Breast epithelium (tissue), 4 donors: ENCODE measurements at regions of chr9 and their contacts with region 1.

Region 1: GRCh38 chr9:129177791-129178559 is at the start of gene IER5L:
- DNase-seq: peak; percentile 96 to 97
- H3K4me3 ChIP-seq: peak within 1 kb of the TSS; percentile 91 to 93 (median 93)
- H3K27ac ChIP-seq: peak within 1 kb of the TSS; percentile 98 to 99
- H3K4me1 ChIP-seq: peaks cover 0 to 4% of the 10 kb centered on the region in 2 donors
- H3K27me3 ChIP-seq: no peaks in the 10 kb centered on the region
- CTCF ChIP-seq: no peak
- POLR2A ChIP-seq: peak; percentile 96
- total RNA-seq, gene IER5L: 4.3 to 18.4 (median 18.1) TPM

Region 2: GRCh38 chr9:129145822-129146292 is 32.1 kb before region 1 on chr9:
- intact Hi-C with region 1: loop called (anchors 2 kb)
- DNase-seq: no peak
- H3K4me3 ChIP-seq: peak overlapping the region in 1 of 3 donors; percentile 15
- H3K27ac ChIP-seq: peak overlapping the region; percentile 98 to 100
- H3K4me1 ChIP-seq: peaks cover 39 to 52% of the 10 kb centered on the region in 2 donors
- H3K27me3 ChIP-seq: no peaks in the 10 kb centered on the region
- CTCF ChIP-seq: no peak
- POLR2A ChIP-seq: no peak

Region 3: GRCh38 chr9:129320575-129321263 is 142.7 kb after region 1 on chr9:
- intact Hi-C with region 1: loop called (anchors 10 kb)
- DNase-seq: peak in 1 of 2 donors; percentile 62
- H3K4me3 ChIP-seq: peak overlapping the region; percentile 39 to 66 (median 46)
- H3K27ac ChIP-seq: peak overlapping the region; percentile 85 to 87
- H3K4me1 ChIP-seq: peaks cover 8 to 19% of the 10 kb centered on the region in 2 donors
- H3K27me3 ChIP-seq: no peaks in the 10 kb centered on the region
- CTCF ChIP-seq: peak in 1 of 3 donors; percentile 30
- POLR2A ChIP-seq: no peak

Region 4: DNA sequence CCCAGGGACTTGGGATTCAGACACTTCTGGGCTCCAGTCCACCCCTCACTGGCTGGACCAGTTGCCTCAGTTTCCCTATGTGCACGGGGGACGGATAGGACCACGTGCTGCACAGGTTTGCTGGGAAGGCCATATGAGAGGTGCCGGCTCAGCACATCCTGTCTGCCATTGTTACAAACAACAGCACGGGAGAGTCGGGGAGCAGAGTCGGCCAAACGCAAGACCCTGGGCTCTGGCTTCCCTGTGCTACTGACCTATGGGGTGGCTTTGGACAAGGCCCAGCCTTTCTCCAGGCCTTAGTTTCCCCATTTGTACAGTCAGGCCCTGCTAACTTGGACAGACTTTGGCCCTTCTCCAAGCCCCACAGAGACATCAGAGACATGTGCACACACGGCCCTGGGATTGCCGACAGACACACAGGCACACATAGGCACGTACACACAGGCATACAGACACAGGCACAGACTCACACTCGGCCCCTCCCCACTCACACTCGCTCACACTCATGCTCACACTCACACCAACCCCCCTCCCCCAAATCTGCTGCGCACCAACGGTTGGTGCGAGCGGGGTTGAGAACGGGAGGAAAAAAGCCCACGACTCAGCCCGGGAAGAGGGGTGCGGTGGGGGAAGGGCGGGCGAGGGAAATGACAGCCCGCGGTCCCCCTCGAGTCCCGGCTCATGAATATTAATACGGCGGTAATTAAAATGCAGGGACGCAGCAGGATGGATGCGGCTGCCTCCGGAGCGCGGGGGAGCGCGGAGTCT is 309.9 kb after region 1 on chr9:
- intact Hi-C with region 1: loop called (anchors 5 kb)
- DNase-seq: peak in 1 of 2 donors; percentile 59
- H3K4me3 ChIP-seq: peak overlapping the region; percentile 50 to 70 (median 57)
- H3K27ac ChIP-seq: peak overlapping the region; percentile 100
- H3K4me1 ChIP-seq: peaks cover 29 to 55% of the 10 kb centered on the region in 2 donors
- H3K27me3 ChIP-seq: no peaks in the 10 kb centered on the region
- CTCF ChIP-seq: peak in 1 of 3 donors; percentile 20
- POLR2A ChIP-seq: no peak

Region 5: GRCh38 chr9:130118841-130119518 is 941.0 kb after region 1 on chr9:
- intact Hi-C with region 1: no loop called
- DNase-seq: no peak
- H3K4me3 ChIP-seq: no peak overlapping the region
- H3K27ac ChIP-seq: no peak overlapping the region
- H3K4me1 ChIP-seq: no peaks in the 10 kb centered on the region
- H3K27me3 ChIP-seq: no peaks in the 10 kb centered on the region
- CTCF ChIP-seq: no peak
- POLR2A ChIP-seq: no peak